Naive thymus-derived CD8-positive, alpha-beta T cell (primary cell): ENCODE measurements at regions of chr2 and their contacts with region 1.

Region 1: GRCh38 chr2:84858123-84858522 is 22.8 kb downstream of the TRABD2A start:
- DNase-seq: peak in 1 of 10 donors; percentile 18
- ATAC-seq: no peak
- H3K4me3 Mint-ChIP-seq: peak overlapping the region; percentile 4 to 87 (median 80)
- H3K27ac Mint-ChIP-seq: peak overlapping the region; percentile 93 to 99 (median 98)
- H3K4me1 Mint-ChIP-seq: peaks cover 75 to 96% (median 94%) of the 10 kb centered on the region in 4 donors
- H3K27me3 Mint-ChIP-seq: no peaks in the 10 kb centered on the region

Region 2: DNA sequence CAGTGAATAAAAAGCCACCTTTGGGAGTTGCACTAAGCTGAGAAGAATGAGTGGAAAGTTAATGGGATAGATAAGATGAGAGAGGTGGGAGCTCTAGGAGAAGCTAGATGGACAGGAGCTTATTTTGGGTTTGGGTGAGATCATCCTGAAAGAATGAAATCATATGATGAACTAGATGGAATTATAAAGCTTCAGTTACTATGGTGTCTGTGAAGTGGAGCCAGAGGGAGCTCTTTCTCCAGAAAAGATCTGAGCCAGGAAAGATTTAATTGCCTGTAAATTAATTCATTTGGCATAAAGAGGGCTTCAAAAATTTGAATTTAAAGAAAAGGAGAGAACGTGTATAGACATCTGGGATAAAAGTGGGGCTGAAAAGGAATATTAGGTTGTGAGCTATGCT is 331.6 kb before region 1 on chr2:
- POLR2A ChIA-PET with region 1: no interaction called
- DNase-seq: peak in 2 of 10 donors; percentile 24 to 26
- ATAC-seq: no peak
- H3K4me3 Mint-ChIP-seq: peak overlapping the region in 3 of 10 donors; percentile 5 to 45 (median 10)
- H3K27ac Mint-ChIP-seq: peak overlapping the region in 7 of 10 donors; percentile 3 to 72 (median 37)
- H3K4me1 Mint-ChIP-seq: peaks cover 11 to 19% (median 15%) of the 10 kb centered on the region in 4 donors
- H3K27me3 Mint-ChIP-seq: peaks cover 0 to 2% (median 0%) of the 10 kb centered on the region in 5 donors

Region 3: DNA sequence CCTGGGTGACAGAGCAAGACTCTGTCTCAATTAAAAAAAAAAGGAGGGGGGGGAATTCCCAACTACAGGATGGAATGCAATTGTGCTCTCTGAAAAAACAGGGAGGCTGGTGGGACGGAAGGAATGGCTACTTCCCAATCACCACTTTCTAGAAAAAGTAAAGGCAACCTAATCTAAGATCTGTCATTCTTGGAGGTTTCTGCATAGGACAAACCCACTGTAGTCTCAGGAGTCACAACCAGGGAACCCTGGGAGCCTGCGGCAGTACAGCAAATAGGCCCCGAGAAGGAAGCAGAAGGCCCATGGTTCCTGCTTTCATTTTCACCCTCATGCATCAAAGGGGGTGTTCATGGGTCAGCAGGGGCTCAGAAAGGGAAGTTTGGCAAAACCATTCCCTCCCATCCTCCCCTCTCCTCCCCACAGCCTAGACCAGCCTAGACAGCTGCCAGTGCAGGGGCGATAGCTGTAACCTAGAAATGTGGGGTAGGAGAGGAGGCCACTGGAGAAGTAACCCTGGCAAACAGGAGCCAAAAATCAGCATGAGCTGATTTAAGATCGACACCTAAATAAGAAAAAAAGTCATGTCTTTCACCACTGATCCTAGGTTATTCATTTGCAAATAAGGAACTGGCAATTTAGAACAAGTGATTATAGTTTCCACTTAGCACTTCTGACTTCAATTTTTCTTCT is 25.2 kb before region 1 on chr2:
- POLR2A ChIA-PET with region 1: interaction called, 247 read pairs
- DNase-seq: peak in 2 of 10 donors; percentile 22 to 30
- ATAC-seq: peak; percentile 51 to 52
- H3K4me3 Mint-ChIP-seq: peak overlapping the region in 8 of 10 donors; percentile 49 to 85 (median 82)
- H3K27ac Mint-ChIP-seq: no peak overlapping the region
- H3K4me1 Mint-ChIP-seq: peaks cover 25 to 44% (median 31%) of the 10 kb centered on the region in 4 donors
- H3K27me3 Mint-ChIP-seq: no peaks in the 10 kb centered on the region

Region 4: GRCh38 chr2:84870306-84870705 is 12.2 kb after region 1 on chr2:
- POLR2A ChIA-PET with region 1: interaction called, 247 read pairs
- DNase-seq: no peak
- ATAC-seq: no peak
- H3K4me3 Mint-ChIP-seq: peak overlapping the region; percentile 10 to 74 (median 66)
- H3K27ac Mint-ChIP-seq: peak overlapping the region; percentile 80 to 93 (median 91)
- H3K4me1 Mint-ChIP-seq: peaks cover 48 to 90% (median 79%) of the 10 kb centered on the region in 4 donors
- H3K27me3 Mint-ChIP-seq: no peaks in the 10 kb centered on the region